Right ventricle myocardium inferior (tissue), 1 donor: ENCODE measurements at regions of chr15 and their contacts with region 1.

Region 1: GRCh38 chr15:77496710-77497103 is 76.0 kb downstream of the HMG20A start:
- DNase-seq: peak; percentile 95
- ATAC-seq: peak; percentile 87

Region 2: DNA sequence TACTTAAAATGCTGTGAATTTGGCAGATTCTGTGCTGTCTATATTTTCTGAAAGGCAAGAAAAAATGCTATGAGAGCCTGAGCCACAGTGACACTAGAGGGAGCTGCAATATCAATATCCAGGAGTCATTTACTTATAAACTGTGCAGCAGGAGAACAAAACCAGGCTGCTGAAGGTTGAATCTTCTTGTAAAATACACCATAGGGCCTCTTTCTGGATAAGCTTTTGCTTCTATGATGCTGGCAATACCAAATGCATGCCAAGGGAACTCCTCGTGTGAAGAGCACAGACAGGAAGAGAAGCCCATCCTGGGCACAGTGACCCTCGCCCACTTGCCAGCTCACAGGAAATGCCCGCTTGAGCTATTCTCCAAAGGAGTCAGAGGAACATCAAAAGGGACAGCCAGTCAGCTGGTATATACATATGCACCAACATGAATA is 377.8 kb before region 1 on chr15:
- intact Hi-C with region 1: loop called (anchors 1 kb)
- DNase-seq: no peak
- ATAC-seq: peak; percentile 58